MCF 10A (cell line): ENCODE measurements at regions of chr4 and their contacts with region 1.

Region 1: DNA sequence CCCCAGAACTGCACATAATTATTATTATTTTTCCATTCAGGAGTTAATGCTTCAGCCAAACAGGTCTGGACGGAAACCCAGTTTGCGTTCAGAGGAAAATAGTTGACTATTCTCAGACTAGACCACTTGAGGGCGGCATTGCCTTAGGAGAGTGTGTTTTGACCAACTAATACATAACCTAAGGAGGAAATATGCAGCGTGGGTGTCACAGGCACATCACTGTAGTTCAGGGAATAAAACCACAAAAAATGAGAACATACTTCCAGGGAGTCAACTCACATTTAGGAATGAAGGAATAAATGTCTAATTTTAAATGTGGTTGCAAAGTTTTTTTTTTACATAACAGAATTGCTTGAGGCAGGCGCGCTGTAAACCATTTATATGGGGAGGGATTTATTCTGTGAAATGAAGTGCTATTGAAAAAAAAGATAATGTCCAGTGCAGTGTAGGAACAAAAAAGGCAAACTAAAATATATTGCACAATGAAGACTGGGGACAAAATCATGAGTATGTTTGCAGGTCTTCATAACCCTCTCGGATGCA is 93.3 kb downstream of the SYNPO2 start:
- DNase-seq: peak; percentile 85
- H3K4me3 Mint-ChIP-seq: no peak overlapping the region
- H3K27ac Mint-ChIP-seq: no peak overlapping the region
- H3K4me1 Mint-ChIP-seq: peaks cover 5% of the 10 kb centered on the region
- H3K27me3 Mint-ChIP-seq: no peaks in the 10 kb centered on the region
- CTCF ChIP-seq: peak; percentile 75

Region 2: GRCh38 chr4:119014658-119015057 is 32.7 kb after region 1 on chr4:
- CTCF ChIA-PET with region 1: no interaction called
- POLR2A ChIA-PET with region 1: no interaction called
- intact Hi-C with region 1: no loop called
- DNase-seq: no peak
- H3K4me3 Mint-ChIP-seq: no peak overlapping the region
- H3K27ac Mint-ChIP-seq: no peak overlapping the region
- H3K4me1 Mint-ChIP-seq: no peaks in the 10 kb centered on the region
- H3K27me3 Mint-ChIP-seq: no peaks in the 10 kb centered on the region
- CTCF ChIP-seq: no peak

Region 3: DNA sequence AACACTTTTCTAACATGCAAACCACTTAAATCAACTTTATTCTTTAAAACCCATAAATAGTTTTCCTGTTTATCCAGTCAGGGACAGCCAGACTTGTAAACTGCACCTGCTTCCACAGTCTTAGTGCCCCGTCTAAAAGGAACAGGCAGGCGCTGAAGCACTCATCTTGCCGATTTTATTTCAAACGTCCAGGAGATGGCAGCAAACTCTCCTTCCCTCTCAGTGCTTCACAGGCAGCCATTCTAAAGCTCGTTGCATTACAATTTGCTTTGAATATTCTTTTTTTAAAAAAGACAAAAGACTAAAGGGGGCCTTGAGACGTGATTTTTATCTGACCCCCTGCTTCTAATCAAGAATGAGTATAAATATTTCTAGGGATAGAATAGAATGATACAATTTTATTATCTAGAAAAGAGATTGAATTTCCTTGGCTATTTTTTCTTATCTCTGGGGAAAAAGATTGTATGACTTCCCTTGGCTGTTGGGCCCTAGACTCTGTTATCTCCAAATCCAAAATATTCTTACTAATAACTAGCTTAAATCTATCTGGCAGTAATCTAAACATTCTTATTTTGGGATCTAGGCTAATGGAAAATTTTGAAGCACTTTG is 60.1 kb after region 1 on chr4:
- CTCF ChIA-PET with region 1: interaction called, 93 read pairs
- POLR2A ChIA-PET with region 1: interaction called, 4 read pairs
- intact Hi-C with region 1: loop called (anchors 2 kb)
- DNase-seq: peak; percentile 86
- H3K4me3 Mint-ChIP-seq: no peak overlapping the region
- H3K27ac Mint-ChIP-seq: no peak overlapping the region
- H3K4me1 Mint-ChIP-seq: peaks cover 7% of the 10 kb centered on the region
- H3K27me3 Mint-ChIP-seq: no peaks in the 10 kb centered on the region
- CTCF ChIP-seq: peak; percentile 63

Region 4: DNA sequence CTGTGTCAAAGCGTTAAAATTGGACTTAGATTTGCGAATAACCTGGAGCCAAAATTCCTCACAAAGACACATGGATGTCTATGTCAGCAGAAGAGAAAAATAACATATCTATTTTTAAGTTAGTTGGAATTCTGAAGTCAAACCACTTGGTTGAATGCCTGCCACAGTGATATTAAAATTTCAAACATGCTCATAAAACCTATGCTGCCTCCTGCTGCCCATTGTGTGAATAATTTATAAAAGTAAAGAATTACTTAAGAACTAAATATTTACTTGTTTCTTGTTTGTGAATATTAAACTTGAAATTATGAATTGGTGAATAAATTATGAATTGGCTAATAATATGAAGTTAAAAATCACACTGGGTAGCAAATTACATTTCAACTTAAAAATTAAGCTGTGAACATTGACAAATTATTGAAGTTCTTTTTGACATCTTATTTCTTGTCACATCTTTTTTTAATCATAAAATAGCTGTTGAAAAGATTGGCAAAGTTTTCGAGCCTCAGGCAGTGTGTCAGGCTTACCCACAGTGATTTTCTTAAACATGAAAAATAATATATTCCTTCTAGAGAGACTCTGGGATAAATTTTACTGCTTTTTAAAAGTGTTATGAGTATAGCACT is 304.6 kb after region 1 on chr4:
- CTCF ChIA-PET with region 1: interaction called, 8 read pairs
- POLR2A ChIA-PET with region 1: interaction called, 4 read pairs
- intact Hi-C with region 1: loop called (anchors 1 kb)
- DNase-seq: peak; percentile 64
- H3K4me3 Mint-ChIP-seq: no peak overlapping the region
- H3K27ac Mint-ChIP-seq: no peak overlapping the region
- H3K4me1 Mint-ChIP-seq: peaks cover 18% of the 10 kb centered on the region
- H3K27me3 Mint-ChIP-seq: no peaks in the 10 kb centered on the region
- CTCF ChIP-seq: peak; percentile 54

Region 5: DNA sequence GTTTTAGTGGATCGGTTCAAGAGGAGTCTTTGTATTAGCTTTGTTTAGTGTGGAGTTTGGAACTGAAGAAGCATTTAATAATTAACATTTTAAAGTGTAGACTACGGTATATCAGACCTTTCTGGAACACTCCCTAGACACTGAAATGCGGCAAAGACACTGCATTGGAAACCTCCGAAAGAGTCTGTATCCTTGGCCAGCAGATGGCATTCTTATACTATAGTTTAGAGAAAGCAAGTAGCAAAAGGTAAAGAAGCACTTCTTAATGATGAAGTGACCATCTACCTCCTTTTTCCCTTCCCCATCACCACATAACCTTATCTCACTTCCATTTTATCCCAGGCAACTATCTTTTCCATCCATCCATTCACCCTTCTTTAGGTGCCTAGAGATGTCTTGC is 332.4 kb after region 1 on chr4:
- CTCF ChIA-PET with region 1: interaction called, 3 read pairs
- POLR2A ChIA-PET with region 1: no interaction called
- intact Hi-C with region 1: loop called (anchors 5 kb)
- DNase-seq: peak; percentile 61
- H3K4me3 Mint-ChIP-seq: no peak overlapping the region
- H3K27ac Mint-ChIP-seq: no peak overlapping the region
- H3K4me1 Mint-ChIP-seq: no peaks in the 10 kb centered on the region
- H3K27me3 Mint-ChIP-seq: peaks cover 22% of the 10 kb centered on the region
- CTCF ChIP-seq: peak; percentile 49

Region 6: GRCh38 chr4:119785963-119786362 is 804.1 kb after region 1 on chr4:
- CTCF ChIA-PET with region 1: no interaction called
- POLR2A ChIA-PET with region 1: no interaction called
- intact Hi-C with region 1: loop called (anchors 10 kb)
- DNase-seq: peak; percentile 41
- H3K4me3 Mint-ChIP-seq: no peak overlapping the region
- H3K27ac Mint-ChIP-seq: no peak overlapping the region
- H3K4me1 Mint-ChIP-seq: no peaks in the 10 kb centered on the region
- H3K27me3 Mint-ChIP-seq: no peaks in the 10 kb centered on the region
- CTCF ChIP-seq: peak; percentile 44